ENCODE measurements at regions of chr13 and their contacts with region 1.

Region 1: DNA sequence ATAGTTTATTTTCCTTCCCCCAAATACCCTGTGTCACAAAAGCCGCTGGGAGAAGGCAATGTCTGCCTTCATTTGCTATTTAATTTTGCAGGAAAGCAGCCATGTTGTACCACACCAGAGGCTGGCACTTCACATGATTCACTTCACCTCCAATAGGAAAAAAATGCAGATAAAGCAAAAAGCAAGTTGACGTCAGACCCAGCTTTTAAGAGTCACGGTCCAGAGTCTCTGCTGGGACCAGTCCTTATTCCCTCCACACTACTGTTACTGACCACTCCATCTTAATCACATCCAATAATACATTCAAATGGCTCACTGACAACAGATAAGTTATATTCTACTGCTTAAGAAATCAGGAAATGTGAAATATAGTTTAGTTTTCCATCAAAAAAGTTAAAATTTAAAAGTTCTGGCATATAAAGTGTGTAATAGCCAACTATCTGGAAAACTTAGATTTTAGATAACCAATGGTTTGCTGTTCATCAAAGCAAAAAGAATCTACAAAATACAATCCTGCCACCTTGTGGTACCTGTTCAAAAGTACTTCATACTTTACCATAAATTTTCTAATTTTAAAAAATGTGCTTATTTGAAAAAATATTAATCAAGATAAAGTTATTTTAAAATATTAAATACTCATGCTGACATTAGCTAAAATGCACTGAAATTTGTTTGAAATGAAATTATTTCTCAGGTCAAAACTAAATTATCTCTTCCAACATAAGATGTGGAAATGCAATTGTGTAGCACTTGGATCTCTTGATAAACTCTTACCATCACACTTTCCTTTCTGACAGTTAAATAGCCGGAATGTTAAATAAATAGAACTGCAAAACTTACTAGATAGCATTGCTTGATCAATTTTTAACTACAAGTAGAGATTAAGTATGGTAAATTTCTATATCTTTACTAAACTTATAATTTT is 97.3 kb downstream of the SERP2 start:
- DNase-seq: no peak
- H3K4me3 Mint-ChIP-seq: no peak overlapping the region
- H3K27ac Mint-ChIP-seq: no peak overlapping the region
- H3K4me1 Mint-ChIP-seq: peaks cover 10% of the 10 kb centered on the region
- H3K27me3 Mint-ChIP-seq: no peaks in the 10 kb centered on the region
- CTCF ChIP-seq: no peak

Region 2: DNA sequence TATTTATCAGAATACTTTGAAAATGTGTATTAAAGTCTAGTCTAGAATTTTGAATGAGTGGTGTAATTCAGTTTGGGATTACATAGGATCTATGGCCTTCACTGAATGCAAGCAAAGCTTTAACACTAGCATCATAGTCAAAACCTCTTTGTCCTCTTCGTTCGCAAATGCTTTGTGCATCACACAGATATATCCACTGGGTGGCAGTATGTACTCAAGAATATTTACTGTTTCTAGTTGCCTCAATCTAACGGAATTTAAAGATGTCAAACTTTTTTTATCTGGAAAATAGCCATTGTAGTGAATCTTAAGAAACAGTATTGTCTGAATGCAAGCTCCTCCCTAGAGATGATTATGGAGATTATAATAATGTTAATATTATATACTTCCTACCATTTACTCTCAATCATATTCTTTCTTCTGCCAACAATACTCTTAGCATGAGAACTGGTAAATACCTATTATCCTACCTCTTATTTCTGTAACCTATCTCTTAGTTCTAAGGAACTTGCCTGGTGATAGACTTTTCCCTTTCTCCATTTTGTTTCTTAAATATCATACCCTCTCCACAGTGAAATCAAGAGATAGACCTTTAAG is 565.4 kb before region 1 on chr13:
- CTCF ChIA-PET with region 1: no interaction called
- intact Hi-C with region 1: loop called (anchors 1 kb)
- DNase-seq: peak; percentile 23
- H3K4me3 Mint-ChIP-seq: no peak overlapping the region
- H3K27ac Mint-ChIP-seq: no peak overlapping the region
- H3K4me1 Mint-ChIP-seq: peaks cover 18% of the 10 kb centered on the region
- H3K27me3 Mint-ChIP-seq: no peaks in the 10 kb centered on the region
- CTCF ChIP-seq: peak; percentile 44

Region 3: DNA sequence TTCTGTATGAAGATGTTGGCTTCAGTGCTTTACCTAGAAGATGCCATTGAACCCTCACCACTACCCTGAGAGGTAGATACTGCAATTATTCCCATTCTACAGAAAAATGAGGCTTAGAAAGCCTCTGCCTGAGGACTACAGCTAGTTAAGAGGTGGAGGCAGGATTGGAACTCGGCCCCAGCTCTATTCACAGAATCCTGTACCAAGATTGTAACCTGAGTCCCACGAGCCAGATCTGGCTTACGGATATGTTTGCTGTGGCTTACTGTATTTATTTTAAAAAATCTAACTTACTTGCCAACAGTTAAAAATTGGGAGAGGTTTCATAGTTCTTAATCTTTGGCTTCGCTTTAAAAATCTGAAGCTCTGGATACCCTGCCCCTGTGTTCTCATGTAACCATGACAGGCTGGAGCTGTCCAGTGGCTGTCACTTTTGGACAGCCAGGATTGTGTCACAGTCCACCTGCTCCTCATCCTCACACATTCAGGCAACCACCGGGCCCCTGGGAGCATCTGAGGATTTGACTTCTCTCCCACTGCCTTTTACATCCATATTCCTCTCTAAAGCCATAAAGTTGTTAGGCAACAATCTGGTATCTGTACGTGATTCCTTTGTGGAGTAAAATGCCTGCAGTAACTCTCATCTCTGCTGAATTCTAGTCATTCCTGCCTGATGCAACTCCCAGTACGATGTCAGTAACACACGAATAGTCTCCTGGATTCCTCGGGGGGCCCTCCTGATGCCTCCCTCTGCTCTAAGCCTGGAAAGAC is 258.1 kb before region 1 on chr13:
- CTCF ChIA-PET with region 1: no interaction called
- intact Hi-C with region 1: no loop called
- DNase-seq: no peak
- H3K4me3 Mint-ChIP-seq: no peak overlapping the region
- H3K27ac Mint-ChIP-seq: no peak overlapping the region
- H3K4me1 Mint-ChIP-seq: no peaks in the 10 kb centered on the region
- H3K27me3 Mint-ChIP-seq: no peaks in the 10 kb centered on the region
- CTCF ChIP-seq: no peak